ENCODE measurements at regions of chr16 and their contacts with region 1.

Region 1: DNA sequence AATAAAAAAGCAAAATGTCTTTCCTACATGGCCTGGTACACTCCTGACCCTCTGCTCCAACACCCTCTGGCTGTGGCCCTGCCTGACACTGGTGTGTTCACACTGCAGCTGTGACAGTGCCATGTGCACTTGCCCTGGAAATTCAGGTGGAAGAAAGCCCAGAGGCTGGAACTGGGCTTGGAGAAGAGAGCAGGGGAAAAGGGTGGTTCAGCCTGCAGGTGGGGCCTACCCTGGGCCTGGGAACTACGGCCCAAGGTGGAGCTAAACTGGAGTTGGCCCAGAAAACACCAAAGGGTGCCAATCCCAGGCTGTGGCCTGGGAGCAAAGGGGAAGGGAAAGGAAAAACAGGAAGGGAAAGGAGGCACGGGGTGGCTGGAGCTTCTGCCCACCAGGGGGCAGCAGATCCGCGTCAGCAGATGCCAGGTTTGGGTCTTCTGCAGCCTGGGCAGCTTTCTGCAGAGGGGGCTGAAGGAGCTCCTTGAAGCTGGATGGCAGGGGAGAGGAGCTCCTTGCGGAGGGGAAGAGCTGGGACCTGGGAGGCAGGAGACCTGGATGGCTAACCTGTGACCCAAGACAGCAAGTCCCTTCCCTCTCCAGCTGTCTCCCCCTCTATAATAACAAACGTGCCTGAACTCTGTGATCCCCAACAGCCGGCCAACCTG is 15.4 kb upstream of the CTCF start:
- DNase-seq: peak; percentile 73 to 85
- ATAC-seq: peak; percentile 74 to 84
- H3K4me3 ChIP-seq: no peak overlapping the region
- H3K27ac ChIP-seq: 0 out of 6 replicates have a peak overlapping the region, but pooled peaks of 1 of the 2 experiments have one; percentile 14
- H3K4me1 ChIP-seq: peaks cover under 1% of the 10 kb centered on the region; the same call in 1 of the 3 replicates
- CTCF ChIP-seq: peak; percentile 93
- EP300 ChIP-seq: no peak
- POLR2A ChIP-seq: no peak
- RAD21 ChIP-seq: peak; percentile 81 to 85

Region 2: GRCh38 chr16:67480833-67481560 is 65.9 kb before region 1 on chr16 and contains the start of gene ATP6V0D1:
- CTCF ChIA-PET with region 1: interaction called, 17 read pairs
- POLR2A ChIA-PET with region 1: no interaction called
- DNase-seq: peak; percentile 95 to 98
- ATAC-seq: peak; percentile 91 to 93
- H3K4me3 ChIP-seq: peak within 1 kb of the TSS; percentile 91
- H3K27ac ChIP-seq: peak within 1 kb of the TSS; percentile 86 to 88
- H3K4me1 ChIP-seq: peaks cover 13% of the 10 kb centered on the region
- CTCF ChIP-seq: peak; percentile 88
- EP300 ChIP-seq: 0 out of 5 replicates have a peak, but pooled peaks of 1 of the 2 experiments have one; percentile 14
- POLR2A ChIP-seq: peak; percentile 62
- RAD21 ChIP-seq: peak; percentile 46 to 61; a peak in 4 of 5 replicates
- polyA plus RNA-seq, gene ATP6V0D1: 45.6 and 45.7 TPM in 2 replicates

Region 3: GRCh38 chr16:67530013-67530939 is 16.6 kb before region 1 on chr16:
- CTCF ChIA-PET with region 1: interaction called, 301 read pairs
- POLR2A ChIA-PET with region 1: no interaction called
- DNase-seq: no peak
- ATAC-seq: peak; percentile 17 to 60; a peak in 3 of 6 replicates
- H3K4me3 ChIP-seq: peak overlapping the region; percentile 73
- H3K27ac ChIP-seq: peak overlapping the region; percentile 81 to 93
- H3K4me1 ChIP-seq: peaks cover 43% of the 10 kb centered on the region
- CTCF ChIP-seq: no peak
- EP300 ChIP-seq: no peak
- POLR2A ChIP-seq: no peak
- RAD21 ChIP-seq: no peak

Region 4: DNA sequence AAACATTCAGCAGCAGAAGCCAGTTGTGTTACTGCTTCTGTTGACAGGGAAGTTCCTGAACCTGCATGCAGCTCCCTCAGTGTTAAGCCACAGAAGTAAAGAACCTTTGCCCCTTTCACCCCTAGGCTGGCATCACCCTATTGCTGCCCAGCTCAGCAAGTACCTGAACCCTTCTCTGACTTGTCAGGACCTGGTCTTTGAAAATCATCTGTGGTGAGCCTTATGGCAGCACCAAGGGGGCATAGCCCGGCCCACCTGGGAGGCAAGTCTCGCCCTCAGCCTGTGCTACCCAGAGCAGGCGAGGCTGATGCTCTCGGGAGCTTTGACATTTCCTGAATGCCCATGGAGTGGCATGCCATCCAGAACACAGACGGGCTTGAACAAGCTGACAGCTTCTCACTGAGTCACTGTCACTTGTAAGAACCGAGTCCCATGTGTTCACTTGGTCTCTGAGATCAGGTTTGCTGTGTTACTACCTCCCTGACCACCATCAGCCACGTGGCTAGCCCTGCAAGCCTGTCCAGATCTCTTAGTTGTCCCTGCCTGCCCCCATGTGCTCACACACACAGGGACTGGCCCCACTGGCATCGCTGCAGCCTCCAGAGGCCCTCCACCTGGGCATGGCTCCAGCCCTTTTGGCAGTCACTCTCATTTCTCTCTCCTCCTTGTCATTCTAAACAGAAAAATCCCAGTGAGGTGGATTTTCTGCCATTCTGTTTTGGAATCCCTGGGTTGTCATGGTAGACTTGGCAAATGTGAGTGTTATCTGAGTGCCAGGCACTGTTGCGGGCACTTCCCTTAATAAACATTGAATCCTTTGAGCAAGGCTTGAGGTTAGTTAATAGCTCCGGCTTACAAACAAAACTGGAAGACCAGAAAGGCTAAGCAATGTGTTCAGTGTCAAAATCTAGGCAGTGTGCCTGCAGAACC is 95.2 kb after region 1 on chr16:
- CTCF ChIA-PET with region 1: interaction called, 188 read pairs
- POLR2A ChIA-PET with region 1: interaction called, 3 read pairs
- DNase-seq: no peak
- ATAC-seq: peak; percentile 20 to 22; a peak in 2 of 6 replicates
- H3K4me3 ChIP-seq: no peak overlapping the region
- H3K27ac ChIP-seq: no peak overlapping the region
- H3K4me1 ChIP-seq: 0 out of 3 replicates have a peak, but pooled peaks cover 3% of the 10 kb centered on the region
- CTCF ChIP-seq: no peak
- EP300 ChIP-seq: no peak
- POLR2A ChIP-seq: no peak
- RAD21 ChIP-seq: no peak

Region 5: GRCh38 chr16:67653128-67653786 is 106.4 kb after region 1 on chr16:
- CTCF ChIA-PET with region 1: interaction called, 188 read pairs
- POLR2A ChIA-PET with region 1: no interaction called
- DNase-seq: no peak
- ATAC-seq: peak; percentile 29 to 36; a peak in 3 of 6 replicates
- H3K4me3 ChIP-seq: peak overlapping the region; percentile 58
- H3K27ac ChIP-seq: peak overlapping the region in 1 of 2 experiments; percentile 46; a peak in 4 of 6 replicates
- H3K4me1 ChIP-seq: peaks cover 9% of the 10 kb centered on the region; the same call in 2 of the 3 replicates
- CTCF ChIP-seq: no peak
- EP300 ChIP-seq: no peak
- POLR2A ChIP-seq: no peak
- RAD21 ChIP-seq: no peak

Region 6: DNA sequence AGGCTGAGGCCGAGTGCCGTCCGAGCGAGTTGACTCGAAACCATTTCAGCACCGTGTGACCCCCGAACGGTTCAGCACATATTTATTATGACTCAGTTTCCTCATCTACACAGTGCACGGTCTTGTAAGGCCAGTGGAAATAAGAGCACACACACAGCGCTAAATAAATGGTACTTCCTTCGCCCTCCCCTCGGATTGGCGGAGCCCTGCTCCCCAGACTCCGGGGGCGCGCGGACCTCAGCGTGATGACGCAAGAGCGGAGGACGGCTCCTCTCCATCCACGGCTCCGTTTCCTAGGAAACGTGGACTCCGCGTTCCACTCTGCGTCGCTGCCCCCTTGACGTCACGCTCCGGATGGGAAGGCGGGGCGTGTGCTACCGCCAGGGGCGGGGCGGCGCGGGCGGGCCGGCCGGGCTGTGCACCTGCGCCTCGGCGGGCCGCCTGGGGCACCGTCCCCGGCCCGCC is 113.7 kb after region 1 on chr16 and contains the start of gene PARD6A:
- CTCF ChIA-PET with region 1: interaction called, 12 read pairs
- POLR2A ChIA-PET with region 1: no interaction called
- DNase-seq: peak; percentile 96 to 99
- ATAC-seq: peak; percentile 66 to 81
- H3K4me3 ChIP-seq: peak within 1 kb of the TSS; percentile 91
- H3K27ac ChIP-seq: peak within 1 kb of the TSS; percentile 90 to 92
- H3K4me1 ChIP-seq: peaks cover 8% of the 10 kb centered on the region
- CTCF ChIP-seq: no peak
- EP300 ChIP-seq: no peak
- POLR2A ChIP-seq: no peak
- RAD21 ChIP-seq: no peak
- polyA plus RNA-seq, gene PARD6A: 1.7 and 1.8 TPM in 2 replicates

Region 7: DNA sequence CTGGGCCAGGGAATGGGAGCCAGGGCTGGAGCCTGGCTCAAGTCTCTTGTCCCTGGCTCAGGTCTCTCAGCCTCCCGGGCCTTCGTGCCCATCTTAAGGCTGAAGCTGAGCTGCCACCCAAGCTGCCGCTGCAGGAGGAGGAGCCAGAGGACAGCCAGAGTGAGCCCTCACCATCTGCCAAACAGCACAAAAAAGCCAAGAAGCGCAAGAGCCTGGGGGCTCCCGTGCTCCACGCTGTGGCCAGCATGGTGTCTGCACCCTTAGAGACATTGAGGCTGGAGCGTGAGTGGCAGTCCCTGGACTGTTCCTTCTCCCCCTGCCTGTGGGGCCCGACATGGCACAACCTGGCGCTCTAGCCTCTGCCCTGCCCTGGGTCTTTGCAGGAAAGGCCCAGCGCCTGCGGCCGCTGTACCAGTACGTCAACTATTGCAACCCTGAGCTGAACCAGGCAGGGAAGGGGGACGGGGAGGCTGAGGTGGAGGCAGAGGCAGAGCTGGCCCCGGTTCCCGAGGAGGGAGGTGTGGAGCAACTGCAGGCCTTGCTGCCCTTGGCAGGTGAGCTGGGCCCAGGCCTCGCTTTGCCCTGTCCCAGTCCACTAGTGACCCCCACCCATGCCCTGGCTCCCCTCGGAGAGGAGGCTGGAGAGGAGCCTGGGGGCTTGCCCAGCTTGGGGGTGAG is 121.1 kb after region 1 on chr16:
- CTCF ChIA-PET with region 1: interaction called, 21 read pairs
- POLR2A ChIA-PET with region 1: no interaction called
- DNase-seq: peak; percentile 93 to 98
- ATAC-seq: peak; percentile 86 to 92
- H3K4me3 ChIP-seq: no peak overlapping the region
- H3K27ac ChIP-seq: peak overlapping the region in 1 of 2 experiments; percentile 55; a peak in 3 of 6 replicates
- H3K4me1 ChIP-seq: peaks cover 17% of the 10 kb centered on the region
- CTCF ChIP-seq: peak; percentile 69
- EP300 ChIP-seq: no peak
- POLR2A ChIP-seq: no peak
- RAD21 ChIP-seq: peak; percentile 57 to 65